Activated naive CD4-positive, alpha-beta T cell treated with anti-CD3 and anti-CD28 coated beads for 36 hours (primary cell): ENCODE measurements at regions of chr10 and their contacts with region 1.

Region 1: DNA sequence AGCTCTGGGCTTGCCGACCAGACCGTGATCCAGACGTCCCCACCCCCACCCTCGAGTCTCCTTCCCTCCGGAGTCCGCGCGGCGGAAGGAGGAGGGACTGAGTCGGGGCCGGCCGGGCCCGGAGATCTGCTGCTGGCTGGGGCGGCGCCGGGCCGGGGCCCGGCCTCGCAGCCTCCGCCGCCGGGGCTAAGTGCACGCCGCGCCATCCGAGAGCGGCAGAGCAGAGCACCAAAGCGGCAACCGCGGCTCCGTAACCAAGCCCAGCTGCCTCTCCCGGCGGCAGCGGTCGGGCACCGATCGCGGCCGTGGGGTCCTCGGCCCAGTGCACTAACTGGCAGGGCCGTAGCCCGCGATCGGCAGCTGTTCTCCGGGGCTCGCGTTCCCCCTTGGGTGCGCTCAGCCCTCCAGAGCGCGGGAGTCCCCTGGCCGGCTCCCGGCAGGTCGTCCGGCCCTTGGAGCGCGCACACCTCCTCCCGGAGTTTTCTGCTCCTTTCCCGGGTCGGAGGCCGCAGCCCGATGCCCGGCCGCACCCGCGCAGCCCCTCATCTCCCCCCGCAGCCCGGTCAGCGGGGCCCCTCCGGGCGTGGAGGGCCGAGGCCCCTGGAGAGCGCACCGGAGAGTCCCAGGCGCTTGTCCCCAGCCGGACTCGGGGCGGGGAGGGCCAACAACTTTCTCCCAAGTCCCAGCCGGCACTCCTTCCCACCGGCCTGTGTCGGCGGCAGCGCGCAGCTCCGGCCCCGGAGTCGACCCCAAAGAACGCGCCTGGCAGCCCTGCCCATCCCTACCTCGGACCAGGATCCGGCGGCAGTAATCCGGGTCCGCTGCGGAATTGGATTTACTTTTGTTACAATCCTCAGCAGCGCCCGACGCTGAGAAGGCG is 799 bp downstream of the VAX1 start:
- DNase-seq: no peak
- H3K4me3 Mint-ChIP-seq: no peak overlapping the region
- H3K27ac Mint-ChIP-seq: no peak overlapping the region
- H3K4me1 Mint-ChIP-seq: peaks cover 39% of the 10 kb centered on the region
- H3K27me3 Mint-ChIP-seq: peaks cover 76% of the 10 kb centered on the region

Region 2: DNA sequence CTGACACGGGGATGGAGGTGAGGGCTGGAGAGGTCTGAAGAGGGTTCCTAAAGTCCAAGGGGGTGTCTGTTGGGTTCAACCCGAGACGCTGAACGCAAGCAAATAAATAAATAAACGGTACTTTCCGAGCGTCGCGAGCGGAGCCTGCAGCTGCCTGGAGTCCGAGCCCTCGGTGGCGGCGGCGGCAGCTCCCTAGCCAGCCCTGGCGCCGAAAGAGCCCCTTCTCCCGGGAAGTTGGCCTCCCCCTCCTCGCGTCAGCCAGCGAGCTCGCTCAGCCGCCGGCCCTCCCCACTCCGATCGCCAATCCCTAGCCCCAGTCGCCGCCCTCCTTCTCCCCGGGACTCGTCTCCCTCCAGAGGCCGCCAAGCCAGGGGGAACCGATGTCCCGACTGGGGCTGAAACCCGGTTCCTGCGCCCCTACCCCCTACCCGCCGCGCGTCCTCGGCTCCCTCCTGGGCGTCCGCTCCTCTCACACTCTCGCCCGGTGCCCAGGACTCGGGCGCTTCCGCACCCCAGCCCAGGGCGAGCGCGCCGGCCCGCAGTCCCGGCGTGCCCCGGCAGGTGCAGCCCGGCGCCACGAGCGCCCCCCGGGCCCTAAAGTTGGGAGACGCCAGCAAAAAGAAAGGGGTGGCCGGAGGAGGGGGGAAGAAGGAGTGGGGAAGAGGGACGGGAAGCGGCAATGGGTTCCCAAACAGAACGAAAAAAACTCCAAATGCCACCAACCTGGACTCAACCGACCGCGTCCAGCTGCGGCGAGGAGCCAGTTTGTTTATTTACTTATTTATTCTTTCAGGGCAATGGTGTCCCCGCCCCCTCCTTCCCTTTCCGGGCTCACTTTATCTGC is 864.6 kb before region 1 on chr10 and contains the start of gene GFRA1:
- CTCF ChIA-PET with region 1: no interaction called
- intact Hi-C with region 1: loop called (anchors 10 kb)
- DNase-seq: no peak
- H3K4me3 Mint-ChIP-seq: peak within 1 kb of the TSS; percentile 27
- H3K27ac Mint-ChIP-seq: no peak within 1 kb of the TSS
- H3K4me1 Mint-ChIP-seq: peaks cover 10% of the 10 kb centered on the region
- H3K27me3 Mint-ChIP-seq: peaks cover 62% of the 10 kb centered on the region
- total RNA-seq, gene GFRA1: not detected

Region 3: GRCh38 chr10:117162093-117163021 is 25.1 kb after region 1 on chr10:
- CTCF ChIA-PET with region 1: interaction called, 7 read pairs
- intact Hi-C with region 1: loop called (anchors 1 kb)
- DNase-seq: no peak
- H3K4me3 Mint-ChIP-seq: peak overlapping the region; percentile 29
- H3K27ac Mint-ChIP-seq: no peak overlapping the region
- H3K4me1 Mint-ChIP-seq: peaks cover 34% of the 10 kb centered on the region
- H3K27me3 Mint-ChIP-seq: peaks cover 81% of the 10 kb centered on the region

Region 4: GRCh38 chr10:117543245-117544003 is 406.2 kb after region 1 on chr10:
- CTCF ChIA-PET with region 1: no interaction called
- intact Hi-C with region 1: loop called (anchors 2 kb)
- DNase-seq: peak; percentile 39
- H3K4me3 Mint-ChIP-seq: peak overlapping the region; percentile 53
- H3K27ac Mint-ChIP-seq: no peak overlapping the region
- H3K4me1 Mint-ChIP-seq: peaks cover 44% of the 10 kb centered on the region
- H3K27me3 Mint-ChIP-seq: peaks cover 76% of the 10 kb centered on the region